Activated CD8-positive, alpha-beta T cell treated with anti-CD3 and anti-CD28 coated beads, Interleukin-2, amount 10 ng/mL, durations not matched to agents 7 days and 5 days (primary cell): ENCODE measurements at regions of chr4 and their contacts with region 1.

Region 1: GRCh38 chr4:76993787-76994641 is 44.5 kb downstream of the SEPTIN11 start:
- DNase-seq: peak; percentile 82
- ATAC-seq: peak; percentile 73
- H3K4me3 Mint-ChIP-seq: peak overlapping the region; percentile 49
- H3K27ac Mint-ChIP-seq: peak overlapping the region; percentile 81
- H3K4me1 Mint-ChIP-seq: peaks cover 60% of the 10 kb centered on the region
- H3K27me3 Mint-ChIP-seq: peaks cover 2% of the 10 kb centered on the region

Region 2: GRCh38 chr4:76867880-76868655 is 125.9 kb before region 1 on chr4:
- CTCF ChIA-PET with region 1: no interaction called
- POLR2A ChIA-PET with region 1: no interaction called
- DNase-seq: no peak
- ATAC-seq: no peak
- H3K4me3 Mint-ChIP-seq: no peak overlapping the region
- H3K27ac Mint-ChIP-seq: no peak overlapping the region
- H3K4me1 Mint-ChIP-seq: no peaks in the 10 kb centered on the region
- H3K27me3 Mint-ChIP-seq: peaks cover 3% of the 10 kb centered on the region

Region 3: GRCh38 chr4:76965865-76966579 is 28.0 kb before region 1 on chr4:
- CTCF ChIA-PET with region 1: no interaction called
- POLR2A ChIA-PET with region 1: no interaction called
- DNase-seq: no peak
- ATAC-seq: no peak
- H3K4me3 Mint-ChIP-seq: no peak overlapping the region
- H3K27ac Mint-ChIP-seq: no peak overlapping the region
- H3K4me1 Mint-ChIP-seq: peaks cover 10% of the 10 kb centered on the region
- H3K27me3 Mint-ChIP-seq: no peaks in the 10 kb centered on the region

Region 4: DNA sequence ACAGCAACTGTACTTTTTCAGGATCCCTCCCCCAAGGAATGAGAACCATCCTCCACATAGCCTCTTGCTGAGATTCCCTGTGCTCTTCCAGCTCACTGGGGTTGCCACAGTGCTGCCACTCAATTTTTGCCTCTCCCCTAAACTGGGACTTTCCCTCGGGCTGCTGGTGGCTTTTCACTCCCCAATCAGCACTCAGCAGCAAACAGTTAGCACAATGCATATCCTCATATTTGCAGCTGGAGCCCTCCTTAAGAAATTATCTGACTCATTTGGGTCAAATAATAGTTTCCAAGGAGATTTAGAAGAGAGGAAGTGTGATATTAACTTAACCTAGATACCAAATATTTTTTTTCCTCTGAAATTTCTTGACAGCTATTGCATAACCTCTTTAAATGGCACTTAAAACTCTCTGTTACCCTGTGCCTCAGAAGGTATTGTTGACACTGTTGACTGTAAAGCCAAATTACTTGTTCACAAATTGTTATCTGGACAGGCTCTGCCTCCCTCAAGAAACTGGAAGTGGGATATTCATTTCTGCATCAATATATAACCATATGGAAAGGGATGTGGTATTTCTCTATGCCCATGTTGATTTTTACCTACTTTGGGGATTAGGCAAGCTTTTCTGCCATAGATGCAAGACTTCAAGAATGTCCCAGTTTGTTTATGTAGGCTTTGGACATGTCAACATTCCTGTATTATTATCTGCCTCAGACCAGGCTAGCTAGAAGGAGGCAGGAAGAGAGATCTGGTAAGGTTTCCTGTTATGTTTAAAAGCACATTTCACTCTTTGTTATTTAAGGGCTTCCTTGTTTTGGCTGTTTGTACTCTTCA is 13.6 kb after region 1 on chr4:
- CTCF ChIA-PET with region 1: interaction called, 12 read pairs
- POLR2A ChIA-PET with region 1: no interaction called
- DNase-seq: no peak
- ATAC-seq: peak; percentile 69
- H3K4me3 Mint-ChIP-seq: no peak overlapping the region
- H3K27ac Mint-ChIP-seq: peak overlapping the region; percentile 39
- H3K4me1 Mint-ChIP-seq: peaks cover 39% of the 10 kb centered on the region
- H3K27me3 Mint-ChIP-seq: no peaks in the 10 kb centered on the region

Region 5: DNA sequence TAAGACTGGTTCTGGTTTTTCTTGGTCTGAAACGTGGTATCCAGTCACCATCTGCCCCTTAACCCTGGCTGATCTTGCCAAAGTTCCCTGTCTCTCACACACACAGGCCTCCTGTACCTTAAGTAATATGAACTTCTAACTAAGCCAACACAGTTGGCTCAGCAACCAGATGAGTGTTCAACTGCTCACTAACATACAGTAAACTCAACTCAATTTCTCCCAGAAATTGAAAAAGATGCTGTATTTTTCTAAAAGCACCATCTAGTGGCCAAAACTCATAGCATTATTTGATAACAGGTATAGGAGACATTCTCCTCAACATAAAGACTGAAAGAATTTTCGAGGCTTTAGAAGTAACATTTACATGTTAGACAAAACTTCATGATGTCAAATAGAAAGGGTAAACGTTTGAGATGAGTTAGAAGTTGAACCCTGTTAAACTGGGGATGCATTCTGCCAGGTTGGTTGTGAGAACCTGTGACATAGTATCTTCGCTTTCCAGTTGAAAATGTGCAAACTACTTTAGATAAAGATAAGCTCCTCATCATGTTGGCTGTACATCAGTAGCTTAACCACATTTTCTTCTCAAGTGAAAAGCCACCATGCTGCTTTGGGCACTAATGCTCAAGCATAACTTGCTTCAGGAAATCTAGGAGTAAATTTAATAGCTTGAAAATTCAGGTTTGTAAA is 50.6 kb after region 1 on chr4:
- CTCF ChIA-PET with region 1: interaction called, 23 read pairs
- POLR2A ChIA-PET with region 1: no interaction called
- DNase-seq: no peak
- ATAC-seq: peak; percentile 73
- H3K4me3 Mint-ChIP-seq: no peak overlapping the region
- H3K27ac Mint-ChIP-seq: no peak overlapping the region
- H3K4me1 Mint-ChIP-seq: peaks cover 9% of the 10 kb centered on the region
- H3K27me3 Mint-ChIP-seq: no peaks in the 10 kb centered on the region

Region 6: GRCh38 chr4:77082886-77083608 is 89.0 kb after region 1 on chr4:
- CTCF ChIA-PET with region 1: no interaction called
- POLR2A ChIA-PET with region 1: no interaction called
- DNase-seq: no peak
- ATAC-seq: no peak
- H3K4me3 Mint-ChIP-seq: no peak overlapping the region
- H3K27ac Mint-ChIP-seq: no peak overlapping the region
- H3K4me1 Mint-ChIP-seq: peaks cover 12% of the 10 kb centered on the region
- H3K27me3 Mint-ChIP-seq: no peaks in the 10 kb centered on the region